Mucosa of descending colon (tissue), 3 donors: ENCODE measurements at regions of chr17 and their contacts with region 1.

Region 1: DNA sequence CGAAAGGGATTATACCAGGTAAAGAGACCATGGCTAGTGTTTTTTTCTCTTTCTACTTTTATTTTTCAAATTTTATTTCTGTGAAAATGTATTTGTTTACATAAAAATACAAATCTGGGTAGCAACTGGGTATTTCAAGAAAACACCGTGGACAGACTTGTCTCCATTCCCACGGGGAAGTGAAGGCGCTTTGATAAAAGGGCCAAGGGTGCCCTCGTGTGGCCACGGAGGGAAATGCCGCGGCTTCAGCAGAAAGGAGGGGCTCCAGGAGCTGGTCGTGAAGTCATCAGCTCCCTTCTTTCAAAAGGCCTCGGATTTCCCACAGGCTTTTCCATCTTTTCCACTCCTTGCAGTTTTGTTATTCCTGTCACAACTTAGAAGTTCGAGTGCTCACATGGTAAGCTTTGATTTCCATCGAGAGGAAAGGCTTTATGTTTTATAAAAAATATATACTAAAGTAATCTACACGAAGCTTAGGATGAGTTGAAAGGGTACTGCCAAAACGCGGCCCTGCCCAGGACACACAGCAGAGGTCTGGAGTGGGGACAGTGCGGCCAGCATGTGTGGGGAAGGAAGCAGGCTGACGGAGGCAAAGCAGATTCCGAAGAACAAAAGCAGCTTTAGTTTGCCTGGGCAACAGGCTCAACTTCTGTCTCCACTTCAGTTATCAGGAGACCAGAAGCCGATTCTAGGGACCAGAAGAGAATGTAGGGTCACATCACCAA is 15.3 kb upstream of the MNT start:
- DNase-seq: peak; percentile 87 to 96 (median 94)
- ATAC-seq: peak; percentile 94
- H3K4me3 ChIP-seq: no peak overlapping the region
- H3K4me1 ChIP-seq: peaks cover 4% of the 10 kb centered on the region
- CTCF ChIP-seq: peak; percentile 98

Region 2: DNA sequence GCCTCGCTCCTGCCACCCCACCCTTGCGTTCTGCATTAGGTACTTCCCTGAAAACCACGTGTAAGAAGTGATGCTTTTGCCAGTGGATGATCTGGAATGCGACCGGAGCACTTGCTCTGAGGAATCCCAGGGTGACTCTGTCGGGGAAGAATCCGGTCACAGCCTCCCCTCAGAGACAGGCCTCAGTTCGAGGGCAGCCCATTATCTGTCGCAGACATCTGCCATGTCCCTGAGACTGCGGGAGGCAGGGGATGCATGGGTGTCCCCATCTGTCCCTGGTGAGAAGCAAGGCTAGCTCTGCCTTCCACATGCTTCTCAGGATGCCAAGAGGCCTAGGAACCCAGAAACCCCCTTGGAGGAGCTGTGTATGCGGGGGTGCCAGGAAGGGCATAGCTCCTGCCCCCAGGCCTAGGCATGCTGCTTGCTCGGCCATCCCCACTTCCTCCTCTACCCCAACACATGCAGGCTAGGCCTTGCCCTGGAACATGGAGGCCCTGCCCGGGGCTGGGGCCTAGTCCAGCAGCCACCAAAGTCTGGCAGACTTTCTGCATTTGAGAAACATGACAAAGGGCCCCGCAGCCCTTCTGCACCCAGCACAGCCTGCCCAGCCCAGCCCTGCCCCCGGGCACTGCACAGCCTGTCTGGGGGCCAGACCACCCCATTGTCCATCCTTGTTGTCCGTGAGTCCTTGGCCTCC is 35.8 kb before region 1 on chr17:
- intact Hi-C with region 1: loop called (anchors 2 to 5 kb)
- DNase-seq: no peak
- ATAC-seq: no peak
- H3K4me3 ChIP-seq: no peak overlapping the region
- H3K4me1 ChIP-seq: peaks cover 6% of the 10 kb centered on the region
- CTCF ChIP-seq: no peak